Naive thymus-derived CD4-positive, alpha-beta T cell (primary cell): ENCODE measurements at regions of chr5 and their contacts with region 1.

Region 1: DNA sequence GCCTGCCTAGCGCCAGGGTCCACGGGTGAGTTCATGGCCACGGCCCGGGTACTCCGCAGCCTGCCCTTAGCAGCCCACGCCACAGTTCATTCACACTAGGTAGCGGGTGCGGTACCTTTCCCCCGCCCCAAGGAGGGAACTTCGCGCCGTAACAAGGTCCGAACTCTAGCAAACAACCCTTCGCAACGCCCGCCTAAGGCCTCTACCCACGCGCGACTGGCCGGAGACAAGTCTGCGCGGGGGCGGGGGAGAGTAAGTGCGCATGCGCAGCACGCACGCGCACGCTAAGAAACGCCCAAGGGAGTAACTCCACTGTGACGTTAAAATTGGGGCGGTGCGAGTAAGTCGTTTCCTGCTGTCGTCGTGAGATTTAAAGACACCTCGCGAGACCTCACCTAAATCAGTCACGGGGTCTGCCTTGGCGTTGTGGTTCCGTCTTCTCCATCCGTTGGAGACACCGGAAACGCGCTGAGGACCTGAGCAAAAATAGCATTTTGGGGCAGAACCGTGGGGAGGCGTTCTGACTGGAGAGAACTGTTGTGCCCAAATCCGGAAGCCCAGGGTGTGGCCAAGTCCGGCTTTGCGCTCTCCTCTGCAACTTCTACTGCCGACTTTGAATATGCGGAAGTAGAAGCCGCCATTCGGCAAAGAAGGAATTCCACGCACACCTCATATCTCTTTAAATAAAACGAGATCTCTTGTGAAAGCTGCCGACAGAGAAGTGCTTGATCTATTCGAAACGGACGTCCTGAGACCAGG is at the start of gene RAPGEF6:
- DNase-seq: peak; percentile 84 to 99 (median 97)
- ATAC-seq: peak; percentile 91
- H3K4me3 ChIP-seq: peak within 1 kb of the TSS; percentile 95
- H3K4me3 Mint-ChIP-seq: peak within 1 kb of the TSS in 5 of 10 donors; percentile 95 to 99 (median 97)
- H3K27ac ChIP-seq: peak within 1 kb of the TSS; percentile 98
- H3K27ac Mint-ChIP-seq: peak within 1 kb of the TSS; percentile 88 to 100 (median 99)
- H3K4me1 ChIP-seq: peaks cover 43 to 49% of the 10 kb centered on the region in 2 donors
- H3K4me1 Mint-ChIP-seq: peaks cover 16 to 44% (median 31%) of the 10 kb centered on the region in 7 donors
- H3K27me3 ChIP-seq: no peaks in the 10 kb centered on the region
- H3K27me3 Mint-ChIP-seq: peaks cover 0 to 3% (median 0%) of the 10 kb centered on the region in 5 donors
- total RNA-seq, gene RAPGEF6: 50.9 to 186 (median 114) TPM

Region 2: GRCh38 chr5:131170540-131171275 is 464.5 kb before region 1 on chr5 and contains the start of gene LYRM7:
- CTCF ChIA-PET with region 1: no interaction called
- POLR2A ChIA-PET with region 1: no interaction called
- intact Hi-C with region 1: loop called (anchors 1 kb)
- DNase-seq: peak; percentile 70 to 99 (median 95)
- ATAC-seq: peak; percentile 98
- H3K4me3 ChIP-seq: peak within 1 kb of the TSS; percentile 74
- H3K4me3 Mint-ChIP-seq: peak within 1 kb of the TSS; percentile 95 to 100 (median 98)
- H3K27ac ChIP-seq: peak within 1 kb of the TSS; percentile 82
- H3K27ac Mint-ChIP-seq: peak within 1 kb of the TSS; percentile 92 to 98 (median 97)
- H3K4me1 ChIP-seq: peaks cover 11 to 16% of the 10 kb centered on the region in 2 donors
- H3K4me1 Mint-ChIP-seq: peaks cover 37 to 72% (median 63%) of the 10 kb centered on the region in 7 donors
- H3K27me3 ChIP-seq: no peaks in the 10 kb centered on the region
- H3K27me3 Mint-ChIP-seq: no peaks in the 10 kb centered on the region
- total RNA-seq, gene LYRM7: 8.2 to 18.8 (median 16.3) TPM

Region 3: DNA sequence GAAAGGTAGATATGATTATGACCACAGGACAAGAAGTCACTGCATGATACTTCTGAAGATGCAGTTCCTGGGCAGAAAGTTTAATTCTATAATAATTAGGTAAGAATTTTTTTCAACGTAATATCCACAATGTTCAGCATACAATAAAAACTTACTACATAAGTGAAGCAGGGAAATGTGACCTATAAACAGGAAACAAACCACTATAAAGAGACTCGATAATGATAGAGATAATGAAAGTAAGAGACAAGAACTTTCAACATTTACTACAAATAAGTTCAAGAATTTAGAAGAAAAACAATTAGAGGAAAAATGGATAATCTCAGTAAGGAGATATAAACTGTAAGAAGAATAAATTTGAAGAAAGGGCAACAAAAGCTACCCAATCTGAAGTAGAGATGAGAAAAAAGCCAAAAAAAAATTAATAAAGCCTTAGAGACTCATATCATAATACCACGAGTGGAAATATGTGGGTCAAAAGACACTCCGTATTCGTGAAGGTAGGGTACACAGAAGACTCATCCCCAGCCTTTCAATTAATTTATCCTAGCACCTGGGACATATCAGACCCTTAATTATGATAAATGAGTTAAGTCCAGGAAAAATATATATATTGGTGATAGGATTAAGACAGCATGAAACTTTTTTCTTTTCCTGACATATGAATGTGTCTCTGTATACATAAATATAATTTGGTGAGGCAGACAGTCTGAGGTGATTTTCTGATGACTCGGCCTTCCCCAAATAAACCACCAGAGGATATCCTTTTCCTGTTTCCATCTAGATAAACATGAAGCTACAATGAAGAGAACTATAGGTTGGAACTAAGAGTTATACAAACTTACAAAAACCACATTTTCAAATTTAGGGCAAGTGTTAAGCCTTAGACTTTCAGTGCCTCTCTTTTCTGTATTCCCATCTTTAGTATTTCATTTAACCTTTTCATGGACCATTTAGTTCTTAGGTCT is 120.6 kb before region 1 on chr5:
- CTCF ChIA-PET with region 1: no interaction called
- POLR2A ChIA-PET with region 1: interaction called, 4 read pairs
- intact Hi-C with region 1: loop called in 1 of 2 experiments (anchors 1 kb)
- DNase-seq: peak in 5 of 9 donors; percentile 24 to 50 (median 47)
- ATAC-seq: peak; percentile 85
- H3K4me3 ChIP-seq: peak overlapping the region; percentile 41
- H3K4me3 Mint-ChIP-seq: peak overlapping the region; percentile 68 to 95 (median 84)
- H3K27ac ChIP-seq: peak overlapping the region; percentile 56
- H3K27ac Mint-ChIP-seq: peak overlapping the region; percentile 63 to 95 (median 88)
- H3K4me1 ChIP-seq: peaks cover 20 to 28% of the 10 kb centered on the region in 2 donors
- H3K4me1 Mint-ChIP-seq: peaks cover 35 to 91% (median 77%) of the 10 kb centered on the region in 7 donors
- H3K27me3 ChIP-seq: no peaks in the 10 kb centered on the region
- H3K27me3 Mint-ChIP-seq: no peaks in the 10 kb centered on the region

Region 4: GRCh38 chr5:131595088-131596033 is 39.8 kb before region 1 on chr5:
- CTCF ChIA-PET with region 1: interaction called, 5 read pairs
- POLR2A ChIA-PET with region 1: interaction called, 11 read pairs
- intact Hi-C with region 1: loop called (anchors 1 kb)
- DNase-seq: peak in 7 of 9 donors; percentile 26 to 56 (median 52)
- ATAC-seq: peak; percentile 90
- H3K4me3 ChIP-seq: no peak overlapping the region
- H3K4me3 Mint-ChIP-seq: peak overlapping the region; percentile 3 to 76 (median 64)
- H3K27ac ChIP-seq: peak overlapping the region; percentile 29
- H3K27ac Mint-ChIP-seq: peak overlapping the region; percentile 55 to 84 (median 77)
- H3K4me1 ChIP-seq: peaks cover 20 to 24% of the 10 kb centered on the region in 2 donors
- H3K4me1 Mint-ChIP-seq: peaks cover 29 to 86% (median 78%) of the 10 kb centered on the region in 7 donors
- H3K27me3 ChIP-seq: no peaks in the 10 kb centered on the region
- H3K27me3 Mint-ChIP-seq: no peaks in the 10 kb centered on the region

Region 5: DNA sequence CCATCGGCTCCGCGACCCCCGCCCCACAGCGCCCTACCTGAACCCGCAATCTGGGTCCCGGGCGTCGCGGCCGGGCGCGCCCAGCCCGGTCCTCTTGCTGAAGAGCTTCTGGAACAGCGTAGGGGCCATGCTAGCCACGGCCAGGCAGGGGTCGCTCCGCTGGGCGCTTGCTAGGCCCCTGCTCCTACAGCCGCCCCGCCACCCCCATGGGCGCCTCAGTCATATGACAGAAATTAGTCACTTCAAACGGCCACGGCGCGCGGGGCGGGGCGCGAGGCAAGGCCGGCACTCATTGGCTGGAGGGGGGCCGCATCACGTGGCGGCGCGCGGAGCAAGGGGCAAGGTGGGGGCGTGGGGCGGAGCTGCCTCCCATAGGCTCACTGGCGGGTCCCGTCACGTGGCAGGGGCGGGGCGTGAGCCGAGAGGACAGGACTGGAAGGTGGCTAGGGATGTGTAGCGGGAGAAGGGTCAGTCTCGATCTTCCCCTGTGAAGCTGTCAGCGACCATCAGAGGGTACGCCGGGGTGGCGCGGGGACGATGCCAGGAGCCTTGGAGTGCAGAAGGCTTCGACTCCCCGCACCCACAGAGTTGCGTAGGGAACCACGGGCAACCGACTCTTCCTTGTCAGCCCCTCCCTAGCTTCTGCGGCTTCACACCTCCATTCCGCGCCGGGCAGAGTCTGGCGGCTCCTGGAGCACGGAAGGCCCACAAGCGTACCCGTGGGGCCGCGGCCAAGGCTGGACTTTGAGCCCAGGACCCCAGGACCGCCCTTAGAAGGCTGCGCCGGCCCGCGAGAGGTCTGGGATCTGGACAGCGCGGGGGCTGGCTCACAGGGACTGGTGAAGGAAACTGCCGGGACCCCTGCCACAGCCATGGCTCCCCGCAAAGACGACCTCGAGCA is 161.9 kb after region 1 on chr5 and contains the start of gene FNIP1:
- CTCF ChIA-PET with region 1: interaction called, 3 read pairs
- POLR2A ChIA-PET with region 1: interaction called, 18 read pairs
- intact Hi-C with region 1: loop called (anchors 1 kb)
- DNase-seq: peak; percentile 96 to 99 (median 97)
- ATAC-seq: peak; percentile 98
- H3K4me3 ChIP-seq: peak within 1 kb of the TSS; percentile 90
- H3K4me3 Mint-ChIP-seq: peak within 1 kb of the TSS; percentile 88 to 99 (median 97)
- H3K27ac ChIP-seq: peak within 1 kb of the TSS; percentile 95
- H3K27ac Mint-ChIP-seq: peak within 1 kb of the TSS; percentile 92 to 98 (median 97)
- H3K4me1 ChIP-seq: peaks cover 0 to 19% of the 10 kb centered on the region in 2 donors
- H3K4me1 Mint-ChIP-seq: peaks cover 11 to 41% (median 36%) of the 10 kb centered on the region in 7 donors
- H3K27me3 ChIP-seq: no peaks in the 10 kb centered on the region
- H3K27me3 Mint-ChIP-seq: peaks cover 0 to 10% (median 0%) of the 10 kb centered on the region in 5 donors
- total RNA-seq, gene FNIP1: 30.5 to 48.5 (median 40.3) TPM

Region 6: GRCh38 chr5:132419502-132420468 is 784.6 kb after region 1 on chr5:
- CTCF ChIA-PET with region 1: interaction called, 6 read pairs
- POLR2A ChIA-PET with region 1: no interaction called
- intact Hi-C with region 1: loop called in 1 of 2 experiments (anchors 10 kb)
- DNase-seq: peak; percentile 42 to 72 (median 55)
- ATAC-seq: peak; percentile 84
- H3K4me3 ChIP-seq: peak overlapping the region; percentile 12
- H3K4me3 Mint-ChIP-seq: peak overlapping the region; percentile 54 to 88 (median 76)
- H3K27ac ChIP-seq: peak overlapping the region; percentile 77
- H3K27ac Mint-ChIP-seq: peak overlapping the region; percentile 79 to 99 (median 97)
- H3K4me1 ChIP-seq: peaks cover 71 to 92% of the 10 kb centered on the region in 2 donors
- H3K4me1 Mint-ChIP-seq: peaks cover 77 to 98% (median 95%) of the 10 kb centered on the region in 7 donors
- H3K27me3 ChIP-seq: no peaks in the 10 kb centered on the region
- H3K27me3 Mint-ChIP-seq: no peaks in the 10 kb centered on the region

Region 7: GRCh38 chr5:132963175-132964104 is 1328.3 kb after region 1 on chr5 and contains the start of gene AFF4:
- CTCF ChIA-PET with region 1: no interaction called
- POLR2A ChIA-PET with region 1: no interaction called
- intact Hi-C with region 1: loop called in 1 of 2 experiments (anchors 10 kb)
- DNase-seq: peak; percentile 81 to 90 (median 85)
- ATAC-seq: peak; percentile 92
- H3K4me3 ChIP-seq: peak within 1 kb of the TSS; percentile 65
- H3K4me3 Mint-ChIP-seq: peak within 1 kb of the TSS; percentile 90 to 100 (median 98)
- H3K27ac ChIP-seq: peak within 1 kb of the TSS; percentile 94
- H3K27ac Mint-ChIP-seq: peak within 1 kb of the TSS; percentile 96 to 100 (median 98)
- H3K4me1 ChIP-seq: peaks cover 10 to 22% of the 10 kb centered on the region in 2 donors
- H3K4me1 Mint-ChIP-seq: peaks cover 26 to 52% (median 38%) of the 10 kb centered on the region in 7 donors
- H3K27me3 ChIP-seq: no peaks in the 10 kb centered on the region
- H3K27me3 Mint-ChIP-seq: no peaks in the 10 kb centered on the region
- total RNA-seq, gene AFF4: 39.7 to 82.3 (median 69.0) TPM